ENCODE measurements at regions of chr1 and their contacts with region 1.

Region 1: DNA sequence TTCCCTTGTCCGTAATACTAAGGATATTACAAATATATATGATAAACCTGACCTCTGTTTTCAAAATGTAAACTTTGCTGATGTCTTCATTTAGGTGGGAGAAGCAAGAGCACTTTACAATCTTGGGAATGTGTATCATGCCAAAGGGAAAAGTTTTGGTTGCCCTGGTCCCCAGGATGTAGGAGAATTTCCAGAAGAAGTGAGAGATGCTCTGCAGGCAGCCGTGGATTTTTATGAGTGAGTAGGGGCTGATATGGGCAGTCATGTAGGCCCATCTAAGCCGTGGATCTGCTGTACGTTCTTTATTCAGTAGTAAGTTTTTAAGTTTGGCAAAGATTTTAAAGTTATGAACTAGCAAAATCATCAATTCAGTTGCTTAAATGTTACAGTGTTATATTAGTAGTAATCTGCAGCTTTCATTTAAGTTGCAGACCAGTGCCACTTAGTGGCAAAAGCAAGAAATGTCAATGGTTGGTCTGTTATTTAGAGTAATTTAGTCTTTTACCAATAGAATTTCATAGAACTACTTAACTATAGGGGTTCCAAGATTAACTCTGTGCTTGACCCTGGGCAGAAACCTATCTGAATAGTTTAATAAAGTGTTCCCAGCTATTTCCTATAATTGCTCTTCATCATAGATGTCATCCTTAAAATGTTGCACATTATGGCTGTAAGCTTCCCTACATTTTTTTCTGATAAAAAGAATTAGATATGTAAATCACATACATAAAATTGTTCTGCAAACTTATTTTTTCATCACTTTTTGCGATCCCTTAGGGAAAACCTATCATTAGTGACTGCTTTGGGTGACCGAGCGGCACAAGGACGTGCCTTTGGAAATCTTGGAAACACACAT is 21.3 kb downstream of the GPSM2 start:
- DNase-seq: peak in 23 of 42 donors; percentile 21 to 82 (median 57)

Region 2: DNA sequence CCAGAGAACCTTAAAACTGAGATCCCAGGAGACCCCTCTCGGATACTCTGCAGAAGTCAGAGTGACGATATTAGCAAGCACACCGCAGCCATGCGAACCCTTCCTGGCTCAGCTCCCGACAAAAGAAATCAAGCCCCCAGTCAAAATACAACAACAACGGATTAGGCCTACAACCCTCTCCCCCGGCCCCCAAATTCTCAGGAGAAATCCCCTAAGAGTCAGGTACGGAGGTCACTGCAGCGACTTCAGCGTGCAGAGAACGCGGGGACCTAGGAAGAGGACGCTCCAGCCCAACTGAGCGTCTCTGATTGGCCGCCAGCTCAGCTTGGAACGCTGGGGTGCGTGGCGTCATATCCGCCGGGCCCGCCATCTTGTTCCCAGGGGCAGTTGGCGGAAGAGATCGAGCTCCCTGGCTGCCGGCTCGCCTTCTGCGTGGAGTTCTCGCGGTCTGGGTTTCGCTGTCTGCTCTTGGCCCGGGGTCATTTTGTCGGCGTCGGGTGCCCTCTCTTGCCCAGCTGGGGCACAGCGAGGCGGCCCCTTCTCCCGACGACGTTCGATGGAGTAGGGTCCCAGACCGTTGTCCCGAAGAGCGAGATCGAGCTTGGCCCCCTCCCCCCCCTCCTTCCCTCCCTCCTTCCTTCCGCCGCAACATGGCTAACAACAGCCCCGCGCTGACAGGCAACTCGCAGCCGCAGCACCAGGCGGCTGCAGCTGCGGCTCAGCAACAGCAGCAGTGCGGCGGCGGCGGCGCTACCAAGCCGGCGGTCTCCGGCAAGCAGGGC is 206.0 kb before region 1 on chr1 and contains the start of gene PRPF38B:
- intact Hi-C with region 1: loop called (anchors 10 kb)
- DNase-seq: peak; percentile 92 to 99 (median 97)

Region 3: GRCh38 chr1:108746372-108747205 is 151.5 kb before region 1 on chr1 and contains the start of gene STXBP3:
- intact Hi-C with region 1: loop called (anchors 5 kb)
- DNase-seq: peak; percentile 97 to 100 (median 99)

Region 4: GRCh38 chr1:108828022-108828961 is 69.8 kb before region 1 on chr1:
- intact Hi-C with region 1: loop called (anchors 5 kb)
- DNase-seq: peak; percentile 50 to 95 (median 82)